ENCODE measurements at regions of chr1 and their contacts with region 1.

Region 1: DNA sequence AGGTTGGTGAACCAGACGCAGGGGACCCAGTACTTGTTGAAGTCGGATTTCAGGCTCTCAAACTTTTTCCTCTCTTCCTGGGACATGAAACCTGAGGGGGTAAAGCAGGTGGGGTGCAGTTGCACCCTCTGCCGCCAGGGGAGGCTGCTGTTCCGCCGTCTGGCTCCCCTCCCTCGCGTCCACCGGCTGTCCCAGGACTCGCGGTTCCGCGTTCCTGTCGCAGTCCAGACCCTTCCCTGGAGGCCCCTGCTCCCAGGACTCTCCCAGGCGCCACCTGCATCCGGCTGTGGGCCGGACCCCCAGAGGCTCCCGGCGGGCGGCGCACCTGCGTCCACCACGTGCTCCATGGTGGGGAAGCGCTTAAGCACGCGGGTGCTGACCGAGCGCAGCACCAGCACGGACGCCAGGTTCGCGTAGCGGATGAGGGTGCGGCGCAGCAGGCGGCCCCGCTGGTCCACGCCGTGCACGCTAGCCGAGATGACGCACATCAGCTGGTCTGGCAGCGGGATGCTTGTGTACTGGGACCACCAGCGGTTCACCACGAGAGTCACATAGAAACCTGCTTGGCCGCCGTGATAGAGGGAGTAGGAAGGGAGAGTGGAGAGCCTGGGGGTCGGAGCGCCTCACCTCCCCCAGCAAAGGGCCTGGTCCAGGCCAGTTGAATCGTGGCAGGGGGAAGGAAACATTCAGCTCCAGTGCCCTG is 1.7 kb downstream of the BEST4 start:
- DNase-seq: peak in 1 of 2 donors; percentile 66
- ATAC-seq: peak; percentile 68 to 87
- H3K4me3 ChIP-seq: peak overlapping the region; percentile 62 to 72 (median 64)
- H3K27ac ChIP-seq: peak overlapping the region; percentile 44 to 64 (median 55)
- H3K4me1 ChIP-seq: peaks cover 19 to 28% of the 10 kb centered on the region in 2 donors
- H3K27me3 ChIP-seq: no peaks in the 10 kb centered on the region
- CTCF ChIP-seq: peak; percentile 98 to 100 (median 99)
- POLR2A ChIP-seq: no peak

Region 2: GRCh38 chr1:44819608-44820327 is 33.5 kb after region 1 on chr1:
- in situ Hi-C with region 1: no loop called
- intact Hi-C with region 1: loop called (anchors 5 kb)
- DNase-seq: peak; percentile 66 to 85
- ATAC-seq: peak; percentile 83 to 89
- H3K4me3 ChIP-seq: peak overlapping the region; percentile 46 to 70 (median 64)
- H3K27ac ChIP-seq: peak overlapping the region; percentile 86 to 91 (median 89)
- H3K4me1 ChIP-seq: peaks cover 6 to 13% of the 10 kb centered on the region in 2 donors
- H3K27me3 ChIP-seq: no peaks in the 10 kb centered on the region
- CTCF ChIP-seq: no peak
- POLR2A ChIP-seq: peak; percentile 92 to 94

Region 3: DNA sequence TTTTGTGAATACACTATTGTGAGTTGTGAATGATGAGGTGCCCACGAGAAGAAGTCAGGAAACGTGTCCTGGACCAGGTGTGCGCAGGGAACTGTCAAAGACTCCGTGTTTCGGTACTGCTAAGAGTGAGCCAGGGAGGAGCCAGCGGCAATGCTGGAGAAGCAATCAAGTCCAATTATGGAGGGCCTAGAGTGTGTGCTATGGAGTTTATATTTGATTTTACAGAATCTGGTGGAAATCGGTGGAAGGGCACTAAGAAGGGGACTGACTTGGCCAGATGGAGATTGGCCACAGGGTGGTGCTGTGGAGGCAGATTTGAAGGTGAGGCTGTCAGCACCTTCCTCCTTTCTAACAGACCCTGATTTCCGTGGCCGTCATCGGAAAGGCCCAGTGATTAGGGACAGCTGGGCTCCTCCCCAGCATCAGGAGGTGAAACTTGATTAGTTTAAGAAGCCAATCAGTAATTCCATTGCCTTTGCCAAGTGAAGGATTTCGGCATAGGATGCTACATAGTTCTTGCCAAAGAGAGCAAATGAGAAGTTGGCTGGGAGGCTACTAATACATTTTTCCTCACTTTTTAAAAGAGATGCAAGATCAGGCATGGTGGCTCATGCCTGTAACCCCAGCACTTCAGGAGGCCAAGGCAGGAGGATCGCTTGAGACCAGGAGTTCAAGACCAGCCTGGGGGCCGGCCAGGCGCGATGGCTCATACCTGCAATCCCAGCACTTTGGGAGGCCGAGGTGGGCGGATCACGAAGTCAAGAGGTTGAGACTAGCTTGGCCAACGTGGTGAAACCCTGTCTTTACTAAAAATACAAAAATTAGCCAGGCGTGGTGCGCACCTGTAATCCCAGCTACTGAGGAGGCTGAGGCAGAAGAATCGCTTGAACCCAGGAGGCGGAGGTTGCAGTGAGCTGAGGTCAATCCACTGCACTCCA is 49.7 kb after region 1 on chr1:
- in situ Hi-C with region 1: loop called in 1 of 4 experiments (anchors 10 kb)
- intact Hi-C with region 1: loop called (anchors 5 kb)
- DNase-seq: peak; percentile 39 to 63
- ATAC-seq: peak; percentile 57 to 77
- H3K4me3 ChIP-seq: no peak overlapping the region
- H3K27ac ChIP-seq: no peak overlapping the region
- H3K4me1 ChIP-seq: no peaks in the 10 kb centered on the region
- H3K27me3 ChIP-seq: no peaks in the 10 kb centered on the region
- CTCF ChIP-seq: peak; percentile 56 to 87 (median 69)
- POLR2A ChIP-seq: no peak

Measured in gastrocnemius medialis (tissue), 4 donors.